Psoas muscle (tissue), 8 donors: ENCODE measurements at regions of chr5 and their contacts with region 1.

Region 1: GRCh38 chr5:68798877-68799843 is 294.7 kb upstream of the SLC30A5 start:
- DNase-seq: peak; percentile 55 to 69
- ATAC-seq: peak; percentile 76 to 84 (median 78)
- H3K4me3 ChIP-seq: no peak overlapping the region
- H3K27ac ChIP-seq: peak overlapping the region; percentile 91
- H3K4me1 ChIP-seq: peaks cover 43% of the 10 kb centered on the region
- H3K27me3 ChIP-seq: no peaks in the 10 kb centered on the region
- CTCF ChIP-seq: no peak

Region 2: GRCh38 chr5:68450232-68450852 is 348.8 kb before region 1 on chr5:
- intact Hi-C with region 1: loop called in 1 of 2 experiments (anchors 5 kb)
- DNase-seq: no peak
- ATAC-seq: peak; percentile 16 to 70 (median 40)
- H3K4me3 ChIP-seq: no peak overlapping the region
- H3K27ac ChIP-seq: peak overlapping the region; percentile 73
- H3K4me1 ChIP-seq: peaks cover 9% of the 10 kb centered on the region
- H3K27me3 ChIP-seq: no peaks in the 10 kb centered on the region
- CTCF ChIP-seq: no peak

Region 3: GRCh38 chr5:68711293-68712200 is 87.6 kb before region 1 on chr5:
- intact Hi-C with region 1: loop called (anchors 5 to 10 kb)
- DNase-seq: no peak
- ATAC-seq: peak; percentile 38 to 66 (median 60)
- H3K4me3 ChIP-seq: no peak overlapping the region
- H3K27ac ChIP-seq: peak overlapping the region; percentile 85
- H3K4me1 ChIP-seq: peaks cover 44% of the 10 kb centered on the region
- H3K27me3 ChIP-seq: no peaks in the 10 kb centered on the region
- CTCF ChIP-seq: no peak

Region 4: DNA sequence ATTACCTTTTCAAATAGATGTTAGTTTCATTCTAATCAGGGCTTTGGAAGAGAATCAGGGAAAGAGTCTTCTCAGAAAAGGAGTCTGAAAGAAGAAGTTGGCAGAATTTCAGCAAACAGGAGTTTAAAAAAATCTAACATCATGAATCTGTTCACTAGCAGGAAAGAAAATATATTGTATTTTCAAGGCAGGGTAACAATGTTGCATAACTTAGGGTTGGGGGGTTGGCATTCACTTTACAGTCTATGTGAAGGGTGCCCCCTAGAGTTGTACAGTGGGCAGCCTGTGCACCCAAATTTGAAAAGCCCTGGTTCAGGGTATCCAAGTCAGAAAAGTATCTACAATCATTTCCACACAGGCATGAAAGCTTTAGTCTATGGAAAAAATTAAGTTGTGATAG is 53.7 kb before region 1 on chr5:
- intact Hi-C with region 1: loop called in 1 of 2 experiments (anchors 5 kb)
- DNase-seq: no peak
- ATAC-seq: no peak
- H3K4me3 ChIP-seq: no peak overlapping the region
- H3K27ac ChIP-seq: no peak overlapping the region
- H3K4me1 ChIP-seq: peaks cover 30% of the 10 kb centered on the region
- H3K27me3 ChIP-seq: no peaks in the 10 kb centered on the region
- CTCF ChIP-seq: no peak

Region 5: DNA sequence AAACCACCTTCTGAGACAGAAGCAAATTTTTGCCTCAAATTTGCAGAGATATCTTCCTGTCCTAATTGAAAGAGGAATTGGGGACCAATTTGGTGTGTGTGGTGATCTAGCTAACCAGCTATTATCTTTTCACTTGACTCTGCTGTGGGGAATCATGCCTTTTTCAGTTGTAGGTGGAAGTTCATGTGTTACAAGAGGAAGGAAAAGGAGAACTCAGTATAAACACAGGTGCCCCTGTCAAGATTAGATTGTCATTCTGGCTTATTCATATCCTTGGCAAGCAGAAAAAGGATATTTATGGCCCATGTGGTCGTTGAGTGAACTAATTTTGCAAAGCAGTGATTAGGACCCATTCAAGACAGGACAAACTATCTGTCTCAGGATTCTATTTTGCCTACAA is 42.2 kb before region 1 on chr5:
- intact Hi-C with region 1: no loop called
- DNase-seq: no peak
- ATAC-seq: peak in 1 of 4 donors; percentile 28
- H3K4me3 ChIP-seq: no peak overlapping the region
- H3K27ac ChIP-seq: no peak overlapping the region
- H3K4me1 ChIP-seq: peaks cover 4% of the 10 kb centered on the region
- H3K27me3 ChIP-seq: no peaks in the 10 kb centered on the region
- CTCF ChIP-seq: no peak

Region 6: GRCh38 chr5:68962757-68963484 is 163.8 kb after region 1 on chr5:
- intact Hi-C with region 1: loop called (anchors 2 to 10 kb)
- DNase-seq: peak; percentile 48 to 67
- ATAC-seq: peak; percentile 89 to 98 (median 94)
- H3K4me3 ChIP-seq: no peak overlapping the region
- H3K27ac ChIP-seq: no peak overlapping the region
- H3K4me1 ChIP-seq: peaks cover 5% of the 10 kb centered on the region
- H3K27me3 ChIP-seq: no peaks in the 10 kb centered on the region
- CTCF ChIP-seq: peak; percentile 91